PC-9 (cell line): ENCODE measurements at regions of chr10 and their contacts with region 1.

Region 1: GRCh38 chr10:4767033-4767814 is 58.8 kb upstream of the AKR1E2 start:
- DNase-seq: no peak
- H3K4me3 ChIP-seq: no peak overlapping the region
- H3K27ac ChIP-seq: no peak overlapping the region
- H3K4me1 ChIP-seq: peaks cover 19% of the 10 kb centered on the region
- H3K27me3 ChIP-seq: no peaks in the 10 kb centered on the region
- CTCF ChIP-seq: peak; percentile 72

Region 2: GRCh38 chr10:3239066-3239919 is 1527.9 kb before region 1 on chr10:
- CTCF ChIA-PET with region 1: no interaction called
- POLR2A ChIA-PET with region 1: no interaction called
- intact Hi-C with region 1: loop called (anchors 1 kb)
- DNase-seq: peak in 1 of 2 experiments; percentile 79
- H3K4me3 ChIP-seq: no peak overlapping the region
- H3K27ac ChIP-seq: no peak overlapping the region
- H3K4me1 ChIP-seq: no peaks in the 10 kb centered on the region
- H3K27me3 ChIP-seq: no peaks in the 10 kb centered on the region
- CTCF ChIP-seq: peak; percentile 67

Region 3: DNA sequence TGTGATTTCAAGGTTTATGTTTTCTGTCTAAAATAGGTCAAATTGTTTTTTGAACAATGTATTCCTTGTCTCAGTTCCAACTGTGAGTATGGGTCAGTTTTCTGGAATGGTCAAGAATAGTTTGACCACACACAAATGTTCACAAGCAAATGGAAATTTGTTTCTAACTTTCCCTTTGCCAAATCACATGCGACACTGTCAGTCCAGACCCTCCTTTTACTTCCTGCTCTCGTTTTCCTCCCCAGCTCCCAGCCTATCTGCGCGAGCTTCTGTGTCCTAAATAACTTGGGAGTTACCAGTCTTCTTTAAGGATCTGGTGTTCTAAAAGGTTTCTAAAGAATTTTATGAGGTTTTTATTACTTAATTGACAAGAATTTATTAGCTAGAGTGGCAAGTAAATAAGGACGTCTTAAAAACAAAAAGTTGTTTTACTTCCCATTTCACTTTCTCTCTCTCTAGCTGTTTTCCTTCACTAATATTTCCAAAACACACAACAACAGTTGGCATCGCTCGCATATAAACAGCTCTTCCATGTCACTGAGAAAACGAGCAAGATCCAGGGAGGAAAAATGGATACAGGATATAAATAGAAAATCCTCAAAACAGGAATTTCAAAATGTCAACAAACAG is 716.1 kb before region 1 on chr10:
- CTCF ChIA-PET with region 1: no interaction called
- POLR2A ChIA-PET with region 1: no interaction called
- intact Hi-C with region 1: loop called (anchors 10 kb)
- DNase-seq: no peak
- H3K4me3 ChIP-seq: no peak overlapping the region
- H3K27ac ChIP-seq: no peak overlapping the region
- H3K4me1 ChIP-seq: no peaks in the 10 kb centered on the region
- H3K27me3 ChIP-seq: no peaks in the 10 kb centered on the region
- CTCF ChIP-seq: no peak

Region 4: GRCh38 chr10:4353964-4354363 is 413.3 kb before region 1 on chr10:
- CTCF ChIA-PET with region 1: no interaction called
- POLR2A ChIA-PET with region 1: no interaction called
- intact Hi-C with region 1: loop called (anchors 5 kb)
- DNase-seq: peak in 1 of 2 experiments; percentile 59
- H3K4me3 ChIP-seq: no peak overlapping the region
- H3K27ac ChIP-seq: peak overlapping the region; percentile 76
- H3K4me1 ChIP-seq: peaks cover 18% of the 10 kb centered on the region
- H3K27me3 ChIP-seq: no peaks in the 10 kb centered on the region
- CTCF ChIP-seq: no peak

Region 5: GRCh38 chr10:4656576-4657182 is 110.5 kb before region 1 on chr10:
- CTCF ChIA-PET with region 1: no interaction called
- POLR2A ChIA-PET with region 1: no interaction called
- intact Hi-C with region 1: loop called (anchors 1 kb)
- DNase-seq: peak; percentile 30 to 41
- H3K4me3 ChIP-seq: no peak overlapping the region
- H3K27ac ChIP-seq: no peak overlapping the region
- H3K4me1 ChIP-seq: no peaks in the 10 kb centered on the region
- H3K27me3 ChIP-seq: no peaks in the 10 kb centered on the region
- CTCF ChIP-seq: peak; percentile 75

Region 6: GRCh38 chr10:4725917-4726606 is 41.2 kb before region 1 on chr10:
- CTCF ChIA-PET with region 1: interaction called, 3 read pairs
- POLR2A ChIA-PET with region 1: interaction called, 12 read pairs
- intact Hi-C with region 1: no loop called
- DNase-seq: peak in 1 of 2 experiments; percentile 86
- H3K4me3 ChIP-seq: no peak overlapping the region
- H3K27ac ChIP-seq: peak overlapping the region; percentile 89
- H3K4me1 ChIP-seq: peaks cover 16% of the 10 kb centered on the region
- H3K27me3 ChIP-seq: no peaks in the 10 kb centered on the region
- CTCF ChIP-seq: no peak